Activated CD8-positive, alpha-beta T cell treated with anti-CD3 and anti-CD28 coated beads for 36 hours (primary cell): ENCODE measurements at regions of chr19 and their contacts with region 1.

Region 1: DNA sequence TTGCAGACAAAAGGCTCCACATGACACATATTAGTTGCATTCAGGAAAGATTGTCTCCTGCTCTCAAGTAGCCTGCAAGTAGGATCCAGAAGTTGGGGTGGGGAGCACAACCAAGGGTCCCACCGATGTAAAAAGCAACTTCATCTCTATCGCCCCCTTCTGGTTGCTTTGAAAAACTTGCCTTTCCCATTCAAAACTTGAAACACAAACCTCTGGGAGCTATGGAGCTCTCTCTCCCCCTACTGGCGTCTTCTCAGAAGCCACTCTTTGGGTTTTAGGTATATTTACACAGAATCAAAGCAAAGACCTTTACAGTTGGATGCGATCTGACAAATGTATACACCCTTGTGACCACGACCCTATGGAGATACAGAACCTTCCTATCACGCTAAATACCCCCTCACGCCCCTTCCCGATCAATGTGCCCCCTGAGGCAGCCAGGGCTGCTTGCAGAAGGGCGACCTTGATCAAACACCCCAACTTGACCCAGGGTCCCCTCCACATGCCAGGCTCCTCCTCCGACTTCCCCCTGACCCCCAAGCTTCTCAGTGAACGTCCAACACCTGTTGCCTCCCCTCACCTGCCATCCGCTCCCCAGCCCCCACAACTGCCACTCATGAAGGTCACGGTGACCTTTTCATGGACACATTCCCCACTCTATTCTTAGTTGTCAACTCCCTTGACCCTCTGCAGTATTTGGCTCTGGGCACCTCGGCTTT is 10.1 kb downstream of the NOSIP start:
- DNase-seq: peak; percentile 88
- ATAC-seq: peak; percentile 66
- H3K4me3 Mint-ChIP-seq: no peak overlapping the region
- H3K27ac Mint-ChIP-seq: peak overlapping the region; percentile 67
- H3K4me1 Mint-ChIP-seq: peaks cover 43% of the 10 kb centered on the region
- H3K27me3 Mint-ChIP-seq: no peaks in the 10 kb centered on the region
- CTCF ChIP-seq: peak; percentile 100

Region 2: GRCh38 chr19:49502866-49503581 is 67.3 kb before region 1 on chr19:
- CTCF ChIA-PET with region 1: interaction called, 185 read pairs
- POLR2A ChIA-PET with region 1: interaction called, 6 read pairs
- intact Hi-C with region 1: loop called (anchors 2 kb)
- DNase-seq: peak; percentile 60
- ATAC-seq: no peak
- H3K4me3 Mint-ChIP-seq: no peak overlapping the region
- H3K27ac Mint-ChIP-seq: no peak overlapping the region
- H3K4me1 Mint-ChIP-seq: peaks cover 41% of the 10 kb centered on the region
- H3K27me3 Mint-ChIP-seq: no peaks in the 10 kb centered on the region
- CTCF ChIP-seq: peak; percentile 48

Region 3: DNA sequence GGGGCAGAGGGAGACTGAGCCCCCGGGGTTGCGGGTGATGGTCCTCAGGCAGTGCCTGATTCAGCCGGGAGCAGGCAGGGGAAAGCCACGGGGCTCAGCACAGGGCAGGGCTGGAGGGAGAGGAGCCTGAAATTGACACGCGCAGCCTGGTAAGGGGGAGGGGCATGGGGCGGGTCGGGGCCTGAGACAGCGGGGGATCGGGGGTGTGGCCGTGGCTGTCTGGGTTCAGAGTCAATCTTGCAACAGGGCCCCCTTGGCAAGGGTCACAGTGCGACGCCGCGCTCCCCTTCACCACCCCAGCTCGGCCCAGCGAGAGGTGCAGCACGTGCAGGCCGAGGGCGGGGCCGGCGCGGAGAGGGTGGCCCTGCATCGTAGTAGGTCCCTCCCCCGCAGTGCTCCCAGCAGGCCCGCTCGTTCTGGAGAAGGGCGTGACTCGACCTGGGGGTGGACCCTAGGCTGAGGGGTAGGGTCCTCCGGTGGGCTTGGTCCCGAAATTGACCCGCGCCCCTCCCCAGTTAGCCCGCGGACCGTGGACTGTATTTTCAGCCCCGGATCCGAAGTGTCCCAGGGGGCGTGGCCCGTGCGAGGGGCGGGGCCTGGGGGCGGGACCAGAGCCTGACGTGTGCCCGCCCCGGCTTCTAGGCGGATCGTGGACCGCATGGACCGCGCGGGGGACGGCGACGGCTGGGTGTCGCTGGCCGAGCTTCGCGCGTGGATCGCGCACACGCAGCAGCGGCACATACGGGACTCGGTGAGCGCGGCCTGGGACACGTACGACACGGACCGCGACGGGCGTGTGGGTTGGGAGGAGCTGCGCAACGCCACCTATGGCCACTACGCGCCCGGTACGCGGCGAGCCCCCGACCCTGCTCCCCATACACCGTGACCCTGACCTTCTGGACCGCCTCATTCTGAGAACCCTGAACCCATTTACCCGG is 36.5 kb before region 1 on chr19:
- CTCF ChIA-PET with region 1: interaction called, 10 read pairs
- POLR2A ChIA-PET with region 1: interaction called, 3 read pairs
- intact Hi-C with region 1: no loop called
- DNase-seq: peak; percentile 88
- ATAC-seq: peak; percentile 82
- H3K4me3 Mint-ChIP-seq: peak overlapping the region; percentile 80
- H3K27ac Mint-ChIP-seq: peak overlapping the region; percentile 81
- H3K4me1 Mint-ChIP-seq: peaks cover 17% of the 10 kb centered on the region
- H3K27me3 Mint-ChIP-seq: no peaks in the 10 kb centered on the region
- CTCF ChIP-seq: peak; percentile 65

Region 4: GRCh38 chr19:49555600-49556411 is 14.5 kb before region 1 on chr19:
- CTCF ChIA-PET with region 1: interaction called, 84 read pairs
- POLR2A ChIA-PET with region 1: interaction called, 31 read pairs
- intact Hi-C with region 1: loop called (anchors 2 kb)
- DNase-seq: peak; percentile 94
- ATAC-seq: peak; percentile 65
- H3K4me3 Mint-ChIP-seq: peak overlapping the region; percentile 63
- H3K27ac Mint-ChIP-seq: peak overlapping the region; percentile 94
- H3K4me1 Mint-ChIP-seq: peaks cover 76% of the 10 kb centered on the region
- H3K27me3 Mint-ChIP-seq: no peaks in the 10 kb centered on the region
- CTCF ChIP-seq: no peak

Region 5: DNA sequence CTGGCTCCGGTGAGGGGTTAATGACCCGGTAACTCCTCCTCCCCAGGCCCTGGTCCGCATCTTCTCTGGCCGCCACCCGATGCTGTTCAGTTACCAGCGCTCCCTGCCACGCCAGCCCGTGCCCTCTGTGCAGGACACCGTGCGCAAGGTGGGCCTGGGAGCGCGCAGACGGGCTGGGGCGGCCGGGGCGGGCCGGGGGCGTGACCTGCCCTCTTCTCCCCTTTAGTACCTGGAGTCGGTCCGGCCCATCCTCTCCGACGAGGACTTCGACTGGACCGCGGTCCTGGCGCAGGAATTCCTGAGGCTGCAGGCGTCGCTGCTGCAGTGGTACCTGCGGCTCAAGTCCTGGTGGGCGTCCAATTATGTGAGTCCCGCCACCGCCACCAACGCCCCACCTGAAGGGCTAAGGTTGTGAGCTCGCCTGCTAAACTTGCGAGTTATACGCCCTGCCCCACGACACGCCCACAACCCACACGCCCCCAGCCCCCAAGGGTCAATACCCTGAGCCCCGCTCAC is 131.0 kb after region 1 on chr19:
- CTCF ChIA-PET with region 1: no interaction called
- POLR2A ChIA-PET with region 1: no interaction called
- intact Hi-C with region 1: no loop called
- DNase-seq: no peak
- ATAC-seq: no peak
- H3K4me3 Mint-ChIP-seq: no peak overlapping the region
- H3K27ac Mint-ChIP-seq: no peak overlapping the region
- H3K4me1 Mint-ChIP-seq: no peaks in the 10 kb centered on the region
- H3K27me3 Mint-ChIP-seq: no peaks in the 10 kb centered on the region
- CTCF ChIP-seq: no peak